H1 (cell line): ENCODE measurements at regions of chr15 and their contacts with region 1.

Region 1: GRCh38 chr15:73732930-73733329 is 20.2 kb downstream of the INSYN1 start:
- DNase-seq: no peak
- H3K4me3 ChIP-seq: no peak overlapping the region
- H3K27ac ChIP-seq: no peak overlapping the region
- H3K4me1 ChIP-seq: no peaks in the 10 kb centered on the region; a peak in 2 of 7 replicates
- H3K27me3 ChIP-seq: no peaks in the 10 kb centered on the region
- CTCF ChIP-seq: no peak
- EP300 ChIP-seq: no peak
- POLR2A ChIP-seq: no peak
- RAD21 ChIP-seq: no peak

Region 2: GRCh38 chr15:73660455-73660854 is 72.5 kb before region 1 on chr15:
- CTCF ChIA-PET with region 1: no interaction called
- POLR2A ChIA-PET with region 1: no interaction called
- DNase-seq: no peak
- H3K4me3 ChIP-seq: no peak overlapping the region
- H3K27ac ChIP-seq: no peak overlapping the region
- H3K4me1 ChIP-seq: no peaks in the 10 kb centered on the region
- H3K27me3 ChIP-seq: 0 out of 7 replicates have a peak, but pooled peaks cover 0 to 2% (median 0%) of the 10 kb centered on the region in 4 experiments
- CTCF ChIP-seq: no peak
- EP300 ChIP-seq: no peak
- POLR2A ChIP-seq: no peak
- RAD21 ChIP-seq: no peak

Region 3: GRCh38 chr15:73717802-73718201 is 15.1 kb before region 1 on chr15:
- CTCF ChIA-PET with region 1: interaction called, 19 read pairs
- POLR2A ChIA-PET with region 1: interaction called, 10 read pairs
- DNase-seq: no peak
- H3K4me3 ChIP-seq: no peak overlapping the region
- H3K27ac ChIP-seq: no peak overlapping the region
- H3K4me1 ChIP-seq: peaks cover 0 to 4% (median 0%) of the 10 kb centered on the region in 4 experiments; a peak in 1 of 7 replicates
- H3K27me3 ChIP-seq: no peaks in the 10 kb centered on the region
- CTCF ChIP-seq: peak; percentile 50 to 57 (median 53)
- EP300 ChIP-seq: no peak
- POLR2A ChIP-seq: no peak
- RAD21 ChIP-seq: peak; percentile 28 to 56; a peak in 3 of 4 replicates